ENCODE measurements at regions of chr20 and their contacts with region 1.

Region 1: DNA sequence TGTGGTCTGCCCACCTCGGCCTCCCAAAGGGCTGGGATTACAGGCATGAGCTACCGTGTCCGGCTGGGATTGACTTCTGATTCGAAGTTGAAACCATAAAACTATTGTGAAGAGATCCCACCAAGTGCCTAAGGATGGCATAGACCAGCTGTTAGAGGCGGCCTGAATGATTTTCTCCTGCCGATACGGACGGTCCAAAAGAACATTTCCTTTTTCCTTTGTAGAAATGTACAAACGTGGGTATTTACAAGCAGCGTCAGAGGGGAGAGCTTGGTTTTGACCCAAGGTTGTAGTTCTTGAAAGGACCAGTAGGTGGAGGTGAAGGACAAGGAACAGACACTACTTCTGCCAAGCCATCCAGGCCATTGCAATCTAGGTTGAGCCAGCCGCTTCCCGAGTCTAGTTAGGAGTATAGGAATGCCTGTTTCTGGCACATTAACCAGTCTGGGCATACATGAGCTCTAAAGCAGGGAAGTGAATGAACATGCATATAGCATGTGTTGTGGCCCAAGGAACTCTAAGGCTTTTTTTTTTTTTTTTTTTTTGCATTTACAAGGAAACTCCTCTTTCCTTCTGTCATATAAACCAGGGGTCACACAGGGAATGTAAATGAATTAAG is 29.1 kb downstream of the MOCS3 start:
- DNase-seq: peak in 7 of 10 donors; percentile 28 to 90 (median 57)

Region 2: GRCh38 chr20:50943069-50943468 is 44.6 kb before region 1 on chr20:
- intact Hi-C with region 1: no loop called
- DNase-seq: no peak

Region 3: DNA sequence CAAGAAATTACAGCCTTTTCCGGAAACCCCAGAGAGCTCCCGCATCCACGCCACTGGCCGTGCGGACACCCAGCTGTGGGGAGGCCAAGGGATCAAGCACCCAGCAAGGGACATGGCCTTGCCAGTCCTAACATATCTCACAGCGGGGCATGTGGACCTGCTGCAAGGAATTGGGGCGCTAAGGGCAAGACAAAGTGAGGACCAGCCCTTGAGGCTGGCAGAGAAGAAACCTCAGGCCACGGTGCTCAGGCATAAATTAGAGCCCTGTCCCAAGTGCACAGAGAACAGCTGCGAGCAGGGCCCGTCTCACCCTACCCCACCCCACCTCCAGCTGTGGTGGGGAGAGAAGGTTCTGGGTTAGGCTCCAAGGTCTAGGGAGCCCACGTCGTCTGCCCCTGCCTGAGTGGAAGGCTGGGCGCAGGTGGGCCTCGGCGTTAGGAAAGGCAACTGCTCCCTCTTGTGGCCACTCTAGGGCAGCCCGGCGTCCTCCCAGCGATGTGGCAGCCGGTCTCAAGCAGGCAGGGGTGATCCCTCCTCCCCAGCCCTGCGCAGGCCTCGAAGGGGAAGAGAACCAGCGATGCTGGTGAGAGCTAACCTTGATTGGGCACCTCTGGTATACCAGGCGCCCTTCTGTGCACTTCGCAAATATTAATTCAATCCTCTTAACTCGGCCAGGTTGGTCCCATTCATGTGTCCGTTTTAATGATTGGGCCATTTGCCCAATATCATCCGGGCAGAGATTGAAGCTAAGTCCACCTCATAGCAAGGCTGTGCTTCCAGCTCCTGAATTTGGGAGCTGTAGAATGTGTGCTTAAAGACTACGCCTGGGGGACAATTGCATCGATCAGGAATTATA is 319.0 kb after region 1 on chr20:
- intact Hi-C with region 1: loop called (anchors 1 kb)
- DNase-seq: peak; percentile 69 to 97 (median 85)

Region 4: DNA sequence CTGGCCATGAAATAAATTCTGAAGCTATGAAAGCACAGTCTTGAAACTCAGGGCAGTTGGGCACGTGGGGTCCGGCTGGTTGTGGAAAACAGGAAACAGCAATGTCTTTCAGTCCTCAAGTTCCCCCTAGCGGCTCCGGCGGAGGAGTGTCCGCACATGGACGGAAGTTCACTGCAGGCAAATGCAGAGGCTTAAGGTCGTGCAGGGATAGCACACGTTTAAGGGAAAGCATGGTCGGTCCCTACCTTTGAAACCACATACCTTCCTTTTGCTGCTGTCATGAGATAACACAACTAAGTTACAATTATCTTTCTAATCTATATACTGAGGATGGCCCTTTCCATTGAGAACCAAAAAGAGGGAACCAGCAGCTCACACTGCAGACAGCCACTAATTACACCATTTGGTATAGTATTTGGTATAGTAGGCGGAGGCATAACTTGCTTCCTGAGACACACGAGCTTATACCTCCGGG is 607.4 kb after region 1 on chr20:
- intact Hi-C with region 1: loop called (anchors 10 kb)
- DNase-seq: peak; percentile 79 to 97 (median 86)